ENCODE measurements at regions of chr17 and their contacts with region 1.

Region 1: DNA sequence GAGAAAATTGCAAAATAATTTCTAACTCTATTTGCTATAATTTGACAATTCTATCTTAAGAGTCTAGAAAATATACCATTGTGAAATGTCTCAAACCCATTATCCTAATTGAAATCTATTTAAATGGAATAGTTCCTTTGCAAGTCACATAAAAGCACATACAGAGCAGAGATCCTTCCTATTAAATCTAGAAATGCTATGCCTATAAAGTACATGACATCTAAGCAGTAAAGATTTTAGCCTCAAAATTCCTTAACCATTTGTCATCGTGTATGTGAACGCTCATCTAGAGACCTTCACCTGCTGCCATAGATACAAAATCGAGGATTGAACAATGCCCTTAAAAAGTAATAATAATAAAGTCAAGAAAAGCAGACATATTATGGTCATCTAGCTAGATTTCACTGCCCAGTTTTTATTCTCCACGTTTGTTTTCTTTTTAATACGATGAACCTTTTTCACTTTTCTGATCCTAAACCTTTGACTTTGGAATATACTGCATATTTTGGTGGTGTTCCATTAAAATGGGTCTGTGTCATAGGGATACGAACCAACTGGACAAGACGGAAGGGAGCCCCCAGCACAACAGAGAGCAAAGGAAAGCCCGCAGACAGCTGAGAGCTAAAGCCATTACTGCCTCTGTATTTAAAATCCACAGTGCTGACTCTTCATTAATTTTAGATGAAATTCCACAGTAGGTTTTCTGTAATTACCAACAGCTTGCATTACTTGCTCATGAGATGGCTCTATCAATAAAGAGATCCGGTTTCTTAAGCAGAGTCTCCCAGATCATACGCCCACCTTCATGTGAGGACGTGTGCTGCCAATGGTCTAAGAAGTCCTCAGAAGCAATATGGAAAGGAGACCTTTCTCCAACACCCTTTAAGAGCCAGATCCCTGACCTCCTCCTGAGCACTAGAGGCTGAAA is 17.6 kb downstream of the TEX2 start:
- DNase-seq: no peak

Region 2: DNA sequence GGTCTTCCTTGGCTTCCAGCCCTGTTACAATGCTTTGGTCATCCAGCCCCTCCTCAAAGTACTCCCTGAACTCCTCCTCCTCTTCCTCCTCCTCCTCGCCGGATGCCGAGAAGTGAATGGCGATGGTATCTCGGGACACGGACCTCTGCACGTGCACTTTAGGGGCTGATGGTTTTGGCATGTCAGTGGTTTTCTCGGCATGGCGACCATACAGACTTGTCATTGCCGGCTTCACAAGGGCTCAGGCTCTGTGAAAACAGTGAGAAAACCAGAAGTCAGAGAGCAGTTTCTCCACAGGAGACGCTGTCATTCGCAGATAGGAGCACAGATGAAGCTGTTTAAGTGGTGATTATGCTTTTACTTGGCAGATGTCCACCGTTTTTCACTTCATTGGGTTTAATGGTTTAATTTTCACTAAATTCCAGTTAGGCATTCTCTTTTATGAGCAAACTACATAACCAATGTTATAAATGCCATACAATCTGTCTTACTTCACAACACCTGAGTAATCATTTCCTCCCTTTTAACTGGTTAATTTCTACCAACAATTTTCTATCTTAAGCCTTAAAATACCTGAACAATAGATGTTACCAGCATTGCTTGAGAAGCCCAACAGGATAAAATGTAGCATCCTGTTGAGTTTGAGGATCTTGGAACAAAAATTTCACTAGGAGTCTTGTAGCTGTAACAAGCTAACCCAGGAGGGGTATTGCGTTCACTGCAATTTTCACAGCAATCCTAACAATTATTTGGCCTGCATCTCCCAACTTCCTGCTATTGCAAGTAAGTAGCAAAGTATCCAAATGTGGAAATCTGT is 31.3 kb before region 1 on chr17:
- intact Hi-C with region 1: loop called in 1 of 2 experiments (anchors 1 kb)
- DNase-seq: no peak